Heart right ventricle (tissue), 16 donors: ENCODE measurements at regions of chr19 and their contacts with region 1.

Region 1: GRCh38 chr19:2663920-2664571 is 38.4 kb downstream of the GNG7 start:
- DNase-seq: peak; percentile 74 to 81
- ATAC-seq: peak; percentile 85 to 98 (median 95)
- H3K4me3 ChIP-seq: no peak overlapping the region
- H3K27ac ChIP-seq: peak overlapping the region; percentile 53 to 93 (median 86)
- H3K4me1 ChIP-seq: peaks cover 0 to 20% (median 8%) of the 10 kb centered on the region in 9 donors
- H3K27me3 ChIP-seq: no peaks in the 10 kb centered on the region
- CTCF ChIP-seq: peak in 7 of 9 donors; percentile 25 to 56 (median 42)

Region 2: DNA sequence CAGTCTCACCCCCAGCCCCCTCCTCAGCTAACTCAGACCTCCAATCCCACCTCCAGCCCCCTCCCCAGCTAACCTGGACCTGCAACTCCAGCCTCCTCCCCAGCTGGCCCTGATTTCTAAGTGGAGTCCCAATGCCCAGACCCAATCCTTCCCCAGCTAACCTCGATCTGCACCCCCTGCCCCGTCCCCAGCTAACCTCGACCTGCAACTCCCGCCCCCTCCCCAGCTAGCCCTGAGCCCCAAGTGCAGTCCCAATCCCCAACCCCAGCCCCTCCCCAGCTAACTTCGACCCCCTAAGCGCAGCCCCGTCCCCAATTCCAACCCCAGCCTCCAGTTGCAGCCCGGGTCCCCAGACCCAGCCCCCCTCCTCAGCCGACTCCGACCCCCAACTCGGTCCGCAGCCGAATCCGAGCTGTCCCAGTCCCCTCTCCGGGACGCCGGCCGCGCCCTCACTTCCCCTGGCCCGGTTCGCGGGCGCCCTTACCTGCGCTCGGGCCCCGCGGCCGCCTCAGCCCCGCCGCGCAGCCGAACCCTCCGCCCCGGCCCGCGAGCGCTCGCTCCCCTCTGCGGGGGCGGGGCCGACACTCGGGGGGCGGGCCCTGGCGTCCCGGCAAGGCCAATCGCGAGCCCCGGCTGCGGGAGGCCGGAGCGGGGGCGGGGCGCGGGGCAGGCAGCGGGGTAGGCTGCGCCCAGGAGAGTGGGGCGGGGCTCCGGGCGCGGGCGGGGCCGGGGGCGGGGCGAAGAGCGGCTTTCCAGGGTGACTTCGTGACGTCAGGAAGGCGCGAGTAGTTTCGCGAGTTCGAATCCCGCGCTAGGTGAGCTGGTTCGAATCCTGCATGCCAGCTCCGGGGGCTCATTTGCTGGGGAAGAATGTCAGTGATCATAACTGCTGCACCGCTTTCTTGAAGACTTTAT is 38.4 kb after region 1 on chr19 and contains the start of gene GNG7:
- intact Hi-C with region 1: loop called in 1 of 10 experiments (anchors 5 kb)
- DNase-seq: peak; percentile 90 to 96
- ATAC-seq: peak; percentile 98 to 100 (median 99)
- H3K4me3 ChIP-seq: peak within 1 kb of the TSS; percentile 24 to 59 (median 53)
- H3K27ac ChIP-seq: peak within 1 kb of the TSS in 5 of 10 donors; percentile 30 to 67 (median 42)
- H3K4me1 ChIP-seq: peaks cover 0 to 13% (median 4%) of the 10 kb centered on the region in 9 donors
- H3K27me3 ChIP-seq: peaks cover 0 to 10% (median 0%) of the 10 kb centered on the region in 7 donors
- CTCF ChIP-seq: no peak
- total RNA-seq, gene GNG7: 27.9 to 56.9 (median 39.7) TPM

Region 3: DNA sequence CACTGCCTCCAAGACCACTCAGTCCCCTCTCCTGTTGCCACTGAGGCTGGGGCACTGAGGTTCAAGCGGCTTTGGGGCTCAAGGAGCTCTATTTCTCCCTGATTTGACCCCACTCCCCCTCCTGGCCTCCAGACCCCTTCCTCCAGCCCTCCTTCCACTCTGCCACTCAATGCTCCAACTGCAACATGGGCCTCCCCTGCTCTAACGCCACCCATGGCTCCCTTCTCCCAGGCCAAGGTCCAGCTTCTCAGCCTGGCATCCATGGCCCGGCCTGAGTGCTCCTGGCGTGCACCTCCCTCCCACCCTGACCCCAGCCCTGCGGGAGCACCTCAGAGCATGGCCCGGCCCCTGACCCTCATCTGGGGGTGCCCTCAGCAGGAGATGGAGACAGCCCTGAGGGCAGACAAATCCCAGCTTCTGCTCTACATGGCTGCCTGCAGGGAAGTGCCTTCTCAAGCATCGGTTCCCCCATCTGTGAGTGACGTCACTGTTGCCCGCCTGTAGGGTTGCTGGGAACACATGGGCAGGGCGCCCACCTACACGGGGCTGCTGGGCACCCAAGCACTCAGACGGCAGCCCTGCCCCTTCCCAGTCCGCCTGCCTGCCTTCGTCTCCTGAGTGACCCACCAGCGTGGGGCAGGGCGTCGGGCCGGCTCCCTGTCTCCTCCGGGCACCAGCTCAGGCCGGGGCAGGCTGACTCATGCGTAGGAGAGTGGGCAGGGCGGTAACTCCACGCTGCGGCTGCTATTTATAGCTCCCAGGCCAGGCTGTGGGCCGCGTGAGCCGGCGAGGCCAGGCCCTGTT is 58.7 kb after region 1 on chr19:
- intact Hi-C with region 1: loop called in 1 of 10 experiments (anchors 5 kb)
- DNase-seq: peak; percentile 66 to 74
- ATAC-seq: peak; percentile 69 to 91 (median 82)
- H3K4me3 ChIP-seq: no peak overlapping the region
- H3K27ac ChIP-seq: peak overlapping the region; percentile 69 to 94 (median 84)
- H3K4me1 ChIP-seq: peaks cover 8 to 28% (median 19%) of the 10 kb centered on the region in 9 donors
- H3K27me3 ChIP-seq: peaks cover 3 to 76% (median 65%) of the 10 kb centered on the region in 7 donors
- CTCF ChIP-seq: no peak

Region 4: GRCh38 chr19:3304871-3305423 is 640.9 kb after region 1 on chr19:
- intact Hi-C with region 1: no loop called
- DNase-seq: peak; percentile 67 to 72
- ATAC-seq: peak in 7 of 8 donors; percentile 43 to 69 (median 58)
- H3K4me3 ChIP-seq: no peak overlapping the region
- H3K27ac ChIP-seq: no peak overlapping the region
- H3K4me1 ChIP-seq: peaks cover 0 to 9% (median 4%) of the 10 kb centered on the region in 9 donors
- H3K27me3 ChIP-seq: peaks cover 0 to 71% (median 47%) of the 10 kb centered on the region in 7 donors
- CTCF ChIP-seq: peak; percentile 83 to 91 (median 89)